ENCODE measurements at regions of chr1 and their contacts with region 1.

Region 1: GRCh38 chr1:96236156-96236739 is 485.3 kb upstream of the PTBP2 start:
- DNase-seq: peak; percentile 75
- ATAC-seq: peak; percentile 75
- H3K4me3 ChIP-seq: no peak overlapping the region
- H3K27ac ChIP-seq: no peak overlapping the region
- H3K4me1 ChIP-seq: no peaks in the 10 kb centered on the region
- H3K27me3 ChIP-seq: no peaks in the 10 kb centered on the region
- CTCF ChIP-seq: peak; percentile 71
- POLR2A ChIP-seq: no peak
- RAD21 ChIP-seq: peak; percentile 83

Region 2: DNA sequence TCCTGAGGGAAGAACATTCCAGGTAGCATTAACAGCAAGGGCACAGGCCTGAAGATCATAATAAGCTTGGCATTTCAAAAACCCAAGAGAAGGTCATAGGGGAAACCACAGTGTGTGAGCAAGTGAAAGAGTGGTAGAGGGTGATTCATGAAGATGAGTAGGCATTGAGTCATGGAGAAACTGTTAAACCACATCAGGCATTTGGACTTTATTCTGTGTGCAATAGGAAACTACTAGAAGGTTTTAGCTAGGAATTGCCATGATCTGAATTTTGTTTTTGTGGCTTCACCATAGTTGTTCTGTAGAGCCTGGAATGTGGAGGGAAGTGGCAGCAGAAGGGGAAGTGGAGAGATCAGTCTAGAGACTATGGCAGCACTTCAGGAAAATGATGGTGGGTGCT is 126.4 kb after region 1 on chr1:
- CTCF ChIA-PET with region 1: interaction called, 6 read pairs
- POLR2A ChIA-PET with region 1: no interaction called
- dilution Hi-C with region 1: no loop called
- in situ Hi-C with region 1: no loop called
- intact Hi-C with region 1: loop called (anchors 5 kb)
- DNase-seq: peak; percentile 99
- ATAC-seq: peak; percentile 85
- H3K4me3 ChIP-seq: no peak overlapping the region
- H3K27ac ChIP-seq: peak overlapping the region; percentile 65
- H3K4me1 ChIP-seq: peaks cover 24% of the 10 kb centered on the region
- H3K27me3 ChIP-seq: no peaks in the 10 kb centered on the region
- CTCF ChIP-seq: no peak
- POLR2A ChIP-seq: no peak
- RAD21 ChIP-seq: 0 out of 2 replicates have a peak, but pooled peaks have one; percentile 18

Region 3: DNA sequence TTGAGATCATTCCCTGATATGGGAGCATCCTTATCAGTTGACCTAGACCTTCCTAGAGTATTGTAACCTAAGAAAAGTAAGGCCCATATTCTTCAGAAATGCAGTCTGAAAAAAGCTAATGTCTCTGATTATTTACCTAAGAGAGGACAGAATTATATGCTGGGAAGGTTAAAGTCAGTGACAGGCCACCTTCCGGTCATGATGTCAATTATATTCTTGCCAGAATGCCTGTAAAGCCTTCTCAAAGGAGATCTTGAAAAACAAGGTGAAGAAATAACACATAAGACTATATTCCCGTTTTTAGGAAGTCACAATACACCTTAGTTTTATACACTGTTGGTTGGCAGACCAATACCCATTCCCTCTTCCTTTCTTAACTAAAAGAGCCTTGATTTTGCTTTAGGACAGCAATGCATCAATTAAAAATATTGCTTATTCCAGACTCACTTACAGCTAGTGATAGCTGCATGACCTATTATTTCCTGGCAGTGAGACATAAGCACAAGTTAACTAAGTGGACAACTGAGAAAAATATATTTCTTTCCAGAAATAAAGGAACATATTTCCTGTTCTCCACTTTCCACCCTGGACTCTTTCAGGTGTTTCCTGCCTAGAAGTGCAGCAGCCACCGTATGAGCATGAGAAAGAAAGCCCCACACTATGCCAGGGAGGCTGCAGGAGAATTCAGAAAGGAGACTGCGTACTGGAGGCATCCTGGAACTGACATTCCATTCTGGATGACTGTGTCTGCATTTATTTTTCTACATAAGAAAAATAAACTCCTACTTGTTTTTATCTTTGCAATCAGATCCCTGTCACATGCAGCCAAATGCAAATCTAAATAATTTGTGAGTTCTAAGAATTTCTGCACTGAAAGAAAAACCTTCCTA is 152.4 kb after region 1 on chr1:
- CTCF ChIA-PET with region 1: no interaction called
- POLR2A ChIA-PET with region 1: no interaction called
- dilution Hi-C with region 1: no loop called
- in situ Hi-C with region 1: no loop called
- intact Hi-C with region 1: no loop called
- DNase-seq: peak; percentile 87
- ATAC-seq: peak; percentile 99
- H3K4me3 ChIP-seq: no peak overlapping the region
- H3K27ac ChIP-seq: no peak overlapping the region
- H3K4me1 ChIP-seq: peaks cover 7% of the 10 kb centered on the region
- H3K27me3 ChIP-seq: no peaks in the 10 kb centered on the region
- CTCF ChIP-seq: no peak
- POLR2A ChIP-seq: no peak
- RAD21 ChIP-seq: no peak

Region 4: DNA sequence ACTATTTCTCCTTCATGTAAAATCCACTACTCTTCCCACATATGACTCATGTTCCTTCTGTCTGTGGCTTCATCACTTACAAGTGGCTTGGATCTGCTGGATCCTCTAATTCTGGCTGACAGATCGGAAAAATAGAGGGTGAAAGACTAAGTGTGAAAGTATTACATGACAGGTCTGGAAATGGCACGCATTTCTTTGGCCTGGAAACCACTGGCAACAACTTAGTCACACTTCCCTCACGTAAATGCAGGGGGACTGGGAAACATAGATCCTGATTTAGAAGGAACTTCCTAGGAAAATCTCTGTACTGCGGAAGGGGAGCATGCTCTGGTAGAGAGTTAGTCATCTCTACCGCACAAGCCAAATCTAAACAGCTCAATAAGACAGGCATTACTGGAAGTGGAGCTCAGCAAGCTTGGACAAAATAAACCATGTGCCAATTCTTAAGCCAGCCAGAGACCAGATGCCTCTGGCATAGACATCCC is 179.9 kb after region 1 on chr1:
- CTCF ChIA-PET with region 1: no interaction called
- POLR2A ChIA-PET with region 1: no interaction called
- dilution Hi-C with region 1: no loop called
- in situ Hi-C with region 1: no loop called
- intact Hi-C with region 1: loop called (anchors 5 kb)
- DNase-seq: peak; percentile 99
- ATAC-seq: peak; percentile 96
- H3K4me3 ChIP-seq: no peak overlapping the region
- H3K27ac ChIP-seq: peak overlapping the region; percentile 47; the same call in 1 of the 2 replicates
- H3K4me1 ChIP-seq: no peaks in the 10 kb centered on the region
- H3K27me3 ChIP-seq: peaks cover 2% of the 10 kb centered on the region; the same call in 1 of the 2 replicates
- CTCF ChIP-seq: no peak
- POLR2A ChIP-seq: no peak
- RAD21 ChIP-seq: peak; percentile 21; the same call in 1 of the 2 replicates

Region 5: DNA sequence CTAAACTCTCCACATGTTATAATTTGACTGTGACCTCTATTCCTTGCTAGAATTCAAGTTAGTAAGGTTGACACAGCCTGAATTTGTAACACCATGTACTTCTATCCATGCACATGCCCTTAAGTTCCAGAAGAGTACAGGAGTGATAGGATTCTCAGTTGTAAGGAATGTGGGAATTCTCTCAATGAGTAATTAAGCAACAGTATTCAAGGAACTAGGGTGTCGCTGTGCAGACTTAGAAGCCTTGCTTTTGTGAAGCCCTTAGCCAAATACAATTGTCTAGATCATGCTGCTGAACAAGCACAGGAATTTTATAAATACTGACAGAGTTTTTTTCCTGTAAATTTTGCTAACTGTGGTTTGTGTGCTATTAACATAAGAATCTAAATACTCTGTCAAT is 209.1 kb after region 1 on chr1:
- CTCF ChIA-PET with region 1: no interaction called
- POLR2A ChIA-PET with region 1: no interaction called
- dilution Hi-C with region 1: no loop called
- in situ Hi-C with region 1: no loop called
- intact Hi-C with region 1: no loop called
- DNase-seq: no peak
- ATAC-seq: no peak; the same call in 1 of the 2 replicates
- H3K4me3 ChIP-seq: no peak overlapping the region
- H3K27ac ChIP-seq: no peak overlapping the region
- H3K4me1 ChIP-seq: no peaks in the 10 kb centered on the region
- H3K27me3 ChIP-seq: no peaks in the 10 kb centered on the region
- CTCF ChIP-seq: no peak
- POLR2A ChIP-seq: no peak
- RAD21 ChIP-seq: no peak

Region 6: DNA sequence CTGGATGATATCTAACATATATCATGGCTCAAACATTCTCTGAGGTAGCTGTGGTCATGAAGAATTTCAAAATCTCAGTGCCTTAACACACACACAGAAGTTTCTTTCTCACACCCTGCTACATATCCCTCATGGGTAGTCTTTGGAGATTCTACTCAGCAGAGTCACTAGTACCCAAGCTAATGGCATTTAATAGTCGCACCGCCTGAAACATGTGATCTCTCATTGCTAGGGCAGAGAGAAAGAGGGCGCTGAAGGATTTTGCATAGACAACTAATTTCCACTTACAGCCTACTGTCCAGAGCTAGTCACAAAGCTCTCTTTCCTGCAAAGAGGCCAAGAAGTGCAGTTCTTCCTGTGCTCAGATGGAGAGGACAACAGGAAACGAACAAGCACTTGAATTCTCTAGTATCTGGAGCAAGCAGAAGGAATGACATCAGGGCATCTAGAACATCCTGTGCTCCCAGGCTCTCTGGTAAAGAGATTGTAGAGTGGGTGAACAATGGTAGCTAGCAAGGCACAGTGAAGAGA is 301.9 kb after region 1 on chr1:
- CTCF ChIA-PET with region 1: no interaction called
- POLR2A ChIA-PET with region 1: no interaction called
- dilution Hi-C with region 1: no loop called
- in situ Hi-C with region 1: no loop called
- intact Hi-C with region 1: loop called (anchors 5 kb)
- DNase-seq: peak; percentile 68
- ATAC-seq: peak; percentile 58
- H3K4me3 ChIP-seq: no peak overlapping the region
- H3K27ac ChIP-seq: peak overlapping the region; percentile 64; the same call in 1 of the 2 replicates
- H3K4me1 ChIP-seq: peaks cover 8% of the 10 kb centered on the region
- H3K27me3 ChIP-seq: no peaks in the 10 kb centered on the region
- CTCF ChIP-seq: no peak
- POLR2A ChIP-seq: no peak
- RAD21 ChIP-seq: no peak

Region 7: DNA sequence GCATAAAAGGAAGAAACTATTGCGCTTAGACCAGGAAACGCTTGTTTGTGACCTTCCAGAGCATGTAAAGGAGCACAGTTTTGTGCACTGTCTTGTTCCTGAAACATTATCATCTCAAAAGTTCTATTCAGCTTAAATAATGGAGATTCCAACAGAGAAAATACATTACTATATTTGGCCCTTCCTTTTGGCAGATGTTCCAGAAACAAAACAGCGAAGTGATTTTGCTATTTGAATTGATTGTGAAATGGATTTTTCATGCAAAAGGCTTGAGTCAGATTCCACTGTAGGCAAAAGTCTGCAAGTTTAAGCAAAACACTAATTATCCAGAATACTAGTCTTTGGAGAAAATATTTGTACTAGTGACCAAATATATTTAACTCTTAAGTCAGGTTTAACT is 405.0 kb after region 1 on chr1:
- CTCF ChIA-PET with region 1: no interaction called
- POLR2A ChIA-PET with region 1: no interaction called
- dilution Hi-C with region 1: no loop called
- in situ Hi-C with region 1: no loop called
- intact Hi-C with region 1: loop called (anchors 5 kb)
- DNase-seq: peak; percentile 70
- ATAC-seq: peak; percentile 62
- H3K4me3 ChIP-seq: no peak overlapping the region
- H3K27ac ChIP-seq: no peak overlapping the region
- H3K4me1 ChIP-seq: no peaks in the 10 kb centered on the region
- H3K27me3 ChIP-seq: no peaks in the 10 kb centered on the region
- CTCF ChIP-seq: no peak
- POLR2A ChIP-seq: no peak
- RAD21 ChIP-seq: no peak

Region 8: DNA sequence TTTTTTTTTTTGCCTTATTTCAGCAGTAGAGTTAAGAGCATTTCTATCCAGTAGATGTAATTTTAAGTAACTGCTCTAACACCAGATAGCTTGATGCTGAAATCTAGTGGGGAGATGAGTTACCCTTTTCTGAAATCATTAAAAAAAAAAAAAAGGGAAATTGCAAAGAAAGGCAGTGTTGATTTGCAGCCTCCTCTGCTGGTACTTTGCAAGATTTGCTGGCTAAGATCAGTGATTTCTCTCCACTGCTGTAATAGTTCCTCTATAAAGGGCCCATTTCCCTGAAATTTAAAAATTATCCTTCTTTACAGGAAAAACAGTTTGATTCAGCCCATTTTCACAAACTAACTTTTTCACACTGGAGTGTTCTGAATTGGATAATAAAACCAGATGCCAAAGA is 606.0 kb after region 1 on chr1:
- CTCF ChIA-PET with region 1: no interaction called
- POLR2A ChIA-PET with region 1: no interaction called
- dilution Hi-C with region 1: no loop called
- in situ Hi-C with region 1: no loop called
- intact Hi-C with region 1: loop called (anchors 5 kb)
- DNase-seq: peak; percentile 20
- ATAC-seq: no peak
- H3K4me3 ChIP-seq: no peak overlapping the region
- H3K27ac ChIP-seq: no peak overlapping the region
- H3K4me1 ChIP-seq: peaks cover 2% of the 10 kb centered on the region; the same call in 1 of the 2 replicates
- H3K27me3 ChIP-seq: no peaks in the 10 kb centered on the region
- CTCF ChIP-seq: peak; percentile 45
- POLR2A ChIP-seq: no peak
- RAD21 ChIP-seq: peak; percentile 48